AG04450 (cell line): ENCODE measurements at regions of chr5 and their contacts with region 1.

Region 1: DNA sequence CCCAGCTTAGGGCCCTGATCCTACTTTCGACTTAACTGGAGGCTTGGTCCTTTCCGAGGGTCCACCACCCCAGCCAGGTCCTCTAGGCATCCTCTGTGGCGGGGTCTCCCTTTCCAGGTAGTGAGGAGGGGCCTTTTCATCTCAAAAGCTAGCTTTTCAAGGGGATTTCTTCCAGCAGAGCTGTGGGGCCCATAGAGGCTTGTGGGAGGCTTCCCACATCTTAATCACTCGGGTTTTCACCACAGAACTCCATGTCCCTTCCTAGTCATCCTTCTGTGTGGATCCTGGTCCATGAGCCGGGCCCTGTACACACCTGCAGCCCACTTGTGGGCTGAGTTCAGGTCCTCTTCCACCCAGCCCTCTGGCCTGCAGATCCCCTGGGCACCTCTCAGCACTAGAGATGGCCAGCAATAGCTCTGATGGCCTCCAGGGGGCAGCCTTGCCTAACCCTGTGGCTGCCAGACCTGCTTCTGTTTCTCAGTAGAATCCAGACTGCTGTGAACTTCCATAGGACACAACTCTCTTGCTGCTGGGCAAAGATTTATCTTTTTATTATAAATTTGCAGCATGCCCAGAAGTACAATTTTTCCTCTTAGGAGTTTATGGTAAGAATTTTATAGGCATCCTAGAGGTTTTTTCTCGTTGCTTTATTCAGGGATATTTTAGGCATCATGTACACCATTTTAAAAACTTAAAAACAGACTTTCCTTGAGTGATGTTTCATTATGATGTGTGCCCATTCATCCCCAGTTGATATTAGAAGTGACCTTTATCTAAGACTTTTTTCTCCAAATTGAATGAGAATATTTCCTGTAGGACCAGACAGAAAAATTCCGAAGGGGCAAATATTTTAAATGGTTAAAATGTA is 208.9 kb downstream of the TRIO start:
- DNase-seq: peak; percentile 47
- H3K4me3 ChIP-seq: no peak overlapping the region
- H3K27ac ChIP-seq: peak overlapping the region; percentile 21
- H3K27me3 ChIP-seq: no peaks in the 10 kb centered on the region
- CTCF ChIP-seq: peak; percentile 95

Region 2: DNA sequence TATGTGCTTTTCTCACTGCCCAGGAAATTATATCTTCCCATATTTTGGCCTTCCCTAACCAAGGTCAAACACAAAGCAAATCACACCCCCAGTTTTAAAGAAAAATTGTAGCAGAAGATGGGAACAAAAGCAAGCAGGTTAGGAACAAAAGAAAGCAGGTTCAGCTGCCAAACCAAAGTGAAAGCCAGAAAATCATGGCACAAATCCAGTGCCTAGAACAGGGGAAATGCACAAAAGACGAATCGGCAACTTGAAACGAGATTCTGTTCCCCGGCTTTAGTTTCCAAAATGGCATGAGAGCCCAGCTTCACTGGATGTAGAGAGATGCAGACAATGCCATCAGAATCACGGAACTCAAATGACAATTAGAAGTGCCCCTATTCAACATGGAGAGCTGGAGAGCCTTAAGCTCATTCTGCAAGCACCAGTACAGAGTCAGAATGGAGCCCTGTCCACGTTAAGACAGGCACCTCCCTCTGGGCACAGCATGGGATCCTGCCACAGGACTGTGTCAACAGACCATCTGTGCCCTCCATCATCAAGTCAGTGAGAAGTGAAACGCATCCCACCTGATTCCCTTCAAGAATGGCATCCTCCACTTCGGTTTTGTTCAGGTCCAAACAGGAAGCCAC is 421.4 kb before region 1 on chr5:
- CTCF ChIA-PET with region 1: no interaction called
- POLR2A ChIA-PET with region 1: no interaction called
- DNase-seq: no peak
- H3K4me3 ChIP-seq: no peak overlapping the region
- H3K27ac ChIP-seq: no peak overlapping the region
- H3K27me3 ChIP-seq: no peaks in the 10 kb centered on the region
- CTCF ChIP-seq: no peak

Region 3: GRCh38 chr5:14339468-14339867 is 12.6 kb before region 1 on chr5:
- CTCF ChIA-PET with region 1: interaction called, 10 read pairs
- POLR2A ChIA-PET with region 1: no interaction called
- DNase-seq: no peak
- H3K4me3 ChIP-seq: no peak overlapping the region
- H3K27ac ChIP-seq: no peak overlapping the region
- H3K27me3 ChIP-seq: no peaks in the 10 kb centered on the region
- CTCF ChIP-seq: no peak

Region 4: DNA sequence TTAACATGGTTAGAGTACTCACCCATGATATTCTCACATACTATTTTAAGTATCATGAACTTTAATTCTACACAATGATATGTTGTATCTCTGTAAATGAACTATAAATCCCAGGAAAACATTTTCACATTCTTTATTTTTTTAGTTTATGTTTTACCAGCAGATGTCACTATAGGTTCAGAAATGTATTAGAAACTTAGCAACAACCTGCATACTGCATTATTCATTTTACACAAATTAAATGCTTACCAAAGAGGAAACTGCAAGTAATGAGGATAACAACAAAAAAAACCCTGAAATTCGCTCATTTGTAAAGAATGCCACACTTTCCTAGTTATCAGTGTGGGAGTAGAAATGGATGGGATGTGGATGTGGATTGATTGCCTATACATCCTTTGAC is 12.0 kb after region 1 on chr5:
- CTCF ChIA-PET with region 1: interaction called, 13 read pairs
- POLR2A ChIA-PET with region 1: interaction called, 3 read pairs
- DNase-seq: no peak
- H3K4me3 ChIP-seq: no peak overlapping the region
- H3K27ac ChIP-seq: no peak overlapping the region
- H3K27me3 ChIP-seq: no peaks in the 10 kb centered on the region
- CTCF ChIP-seq: no peak

Region 5: GRCh38 chr5:14476786-14477435 is 124.8 kb after region 1 on chr5:
- CTCF ChIA-PET with region 1: no interaction called
- POLR2A ChIA-PET with region 1: no interaction called
- DNase-seq: peak; percentile 30
- H3K4me3 ChIP-seq: no peak overlapping the region
- H3K27ac ChIP-seq: peak overlapping the region; percentile 41
- H3K27me3 ChIP-seq: no peaks in the 10 kb centered on the region
- CTCF ChIP-seq: no peak

Region 6: GRCh38 chr5:14700478-14701436 is 348.7 kb after region 1 on chr5:
- CTCF ChIA-PET with region 1: no interaction called
- POLR2A ChIA-PET with region 1: no interaction called
- DNase-seq: no peak
- H3K4me3 ChIP-seq: no peak overlapping the region
- H3K27ac ChIP-seq: no peak overlapping the region
- H3K27me3 ChIP-seq: no peaks in the 10 kb centered on the region
- CTCF ChIP-seq: no peak